PC-3 (cell line): ENCODE measurements at regions of chr5 and their contacts with region 1.

Region 1: DNA sequence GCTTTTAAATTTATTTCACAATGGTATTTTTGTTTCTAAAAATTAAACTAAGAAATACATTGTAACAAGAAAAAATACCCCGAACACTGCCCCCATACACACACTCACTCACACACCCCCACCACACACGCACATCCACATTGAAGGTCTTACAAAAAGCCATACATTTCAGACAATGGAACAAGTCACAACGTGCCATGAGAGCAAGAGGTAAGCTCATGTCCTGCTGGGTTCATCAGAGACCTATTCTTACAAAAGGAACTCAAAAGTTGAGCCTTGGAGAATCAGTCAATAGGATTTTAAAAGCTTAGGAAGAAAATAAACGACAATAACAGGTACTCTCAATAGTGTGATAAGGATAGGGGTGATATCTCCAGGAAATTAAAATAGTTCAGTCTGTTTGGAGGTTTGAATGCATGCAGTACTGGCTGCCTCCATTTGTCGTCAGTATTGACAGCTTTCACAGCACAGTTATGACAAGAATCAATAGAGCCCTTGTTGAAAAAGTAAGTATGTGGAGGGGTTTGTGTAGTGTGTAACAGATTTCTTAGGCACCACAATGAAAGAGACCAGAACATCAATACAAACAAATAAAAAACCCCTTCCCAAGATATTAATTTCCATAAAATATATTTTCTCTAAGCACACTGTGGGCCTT is 1826.2 kb upstream of the CDH6 start:
- DNase-seq: peak; percentile 49
- ATAC-seq: peak; percentile 89
- H3K4me3 ChIP-seq: no peak overlapping the region
- H3K27ac ChIP-seq: no peak overlapping the region
- H3K4me1 ChIP-seq: no peaks in the 10 kb centered on the region
- H3K27me3 ChIP-seq: no peaks in the 10 kb centered on the region
- CTCF ChIP-seq: peak; percentile 73

Region 2: GRCh38 chr5:29304555-29304954 is 62.8 kb before region 1 on chr5:
- CTCF ChIA-PET with region 1: no interaction called
- POLR2A ChIA-PET with region 1: no interaction called
- intact Hi-C with region 1: no loop called
- DNase-seq: peak; percentile 72
- ATAC-seq: peak; percentile 80
- H3K4me3 ChIP-seq: no peak overlapping the region
- H3K27ac ChIP-seq: peak overlapping the region; percentile 10
- H3K4me1 ChIP-seq: peaks cover 22% of the 10 kb centered on the region
- H3K27me3 ChIP-seq: no peaks in the 10 kb centered on the region
- CTCF ChIP-seq: no peak

Region 3: DNA sequence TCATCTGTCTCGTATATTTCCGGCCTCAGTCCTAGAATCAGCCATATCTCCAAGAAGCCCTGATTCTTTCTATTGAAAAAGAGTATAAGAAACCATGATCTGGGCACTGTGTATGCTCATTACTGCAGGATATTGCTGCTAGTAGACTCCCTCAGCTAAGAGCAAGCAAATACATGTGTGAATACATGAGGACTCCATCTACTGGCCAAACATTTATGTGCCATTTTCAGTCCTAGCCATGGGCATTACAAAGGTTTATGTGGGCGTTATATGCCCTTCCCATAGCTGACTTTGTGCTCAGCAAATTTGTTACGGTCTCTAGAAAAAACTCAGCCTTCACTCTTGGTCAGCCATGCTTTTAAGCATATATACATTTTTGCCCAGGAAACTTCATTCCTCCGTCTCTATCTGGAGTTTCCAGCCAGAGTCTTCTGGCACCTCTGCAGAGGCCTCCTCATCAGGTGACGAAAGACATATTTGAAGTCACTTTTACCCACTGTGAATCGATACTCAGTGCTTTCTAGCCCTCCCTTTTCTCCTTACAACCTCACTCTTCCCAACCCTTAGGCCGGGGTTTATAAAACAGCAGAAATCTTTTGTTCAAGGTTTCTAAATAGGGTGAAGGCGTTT is 330.6 kb after region 1 on chr5:
- CTCF ChIA-PET with region 1: interaction called, 4 read pairs
- POLR2A ChIA-PET with region 1: no interaction called
- intact Hi-C with region 1: loop called (anchors 10 kb)
- DNase-seq: peak; percentile 48
- ATAC-seq: peak; percentile 45
- H3K4me3 ChIP-seq: no peak overlapping the region
- H3K27ac ChIP-seq: no peak overlapping the region
- H3K4me1 ChIP-seq: 0 out of 2 replicates have a peak, but pooled peaks cover 2% of the 10 kb centered on the region
- H3K27me3 ChIP-seq: no peaks in the 10 kb centered on the region
- CTCF ChIP-seq: peak; percentile 73

Region 4: DNA sequence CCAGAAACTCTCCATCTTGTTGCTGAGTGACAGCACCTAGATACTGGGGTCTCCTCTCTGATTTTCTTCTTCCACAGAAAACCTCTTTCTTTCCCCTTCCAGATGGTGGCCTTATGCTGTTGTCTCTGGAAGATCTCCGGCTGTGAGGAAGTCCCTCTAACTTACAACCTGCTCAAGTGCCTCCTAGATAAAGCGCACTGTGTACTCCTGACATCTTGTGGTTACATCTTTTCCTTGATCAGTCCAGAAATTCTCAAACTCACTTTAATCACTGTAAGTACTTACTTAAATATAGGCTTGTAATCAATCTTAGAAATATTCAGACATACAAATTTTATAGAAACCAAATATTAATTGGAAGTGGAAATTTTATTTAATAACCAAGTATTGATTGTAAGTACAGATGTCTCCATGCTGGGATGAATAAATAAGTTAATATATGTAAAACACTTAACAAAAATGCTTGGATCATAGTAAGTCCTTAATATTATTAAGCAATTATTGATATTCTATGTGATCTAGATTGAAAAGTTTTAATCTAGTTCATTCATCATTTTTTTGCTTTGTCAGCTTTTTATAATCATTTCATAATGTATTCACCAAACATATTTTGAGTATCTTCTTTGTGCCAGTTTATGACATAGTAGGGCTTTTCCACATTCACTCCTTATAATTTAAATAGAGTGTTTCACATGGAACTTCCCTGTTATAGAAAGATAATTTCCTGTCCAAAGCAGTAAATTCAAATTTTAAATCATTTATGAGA is 444.8 kb after region 1 on chr5:
- CTCF ChIA-PET with region 1: no interaction called
- POLR2A ChIA-PET with region 1: no interaction called
- intact Hi-C with region 1: loop called (anchors 1 kb)
- DNase-seq: peak; percentile 42
- ATAC-seq: peak; percentile 76
- H3K4me3 ChIP-seq: no peak overlapping the region
- H3K27ac ChIP-seq: no peak overlapping the region
- H3K4me1 ChIP-seq: no peaks in the 10 kb centered on the region
- H3K27me3 ChIP-seq: no peaks in the 10 kb centered on the region
- CTCF ChIP-seq: peak; percentile 59

Region 5: GRCh38 chr5:29942089-29942488 is 574.8 kb after region 1 on chr5:
- CTCF ChIA-PET with region 1: no interaction called
- POLR2A ChIA-PET with region 1: no interaction called
- intact Hi-C with region 1: loop called (anchors 2 kb)
- DNase-seq: peak; percentile 53
- ATAC-seq: peak; percentile 71
- H3K4me3 ChIP-seq: no peak overlapping the region
- H3K27ac ChIP-seq: peak overlapping the region; percentile 35
- H3K4me1 ChIP-seq: 0 out of 2 replicates have a peak, but pooled peaks cover 16% of the 10 kb centered on the region
- H3K27me3 ChIP-seq: no peaks in the 10 kb centered on the region
- CTCF ChIP-seq: no peak

Region 6: GRCh38 chr5:30030110-30030509 is 662.8 kb after region 1 on chr5:
- CTCF ChIA-PET with region 1: no interaction called
- POLR2A ChIA-PET with region 1: no interaction called
- intact Hi-C with region 1: loop called (anchors 10 kb)
- DNase-seq: peak; percentile 42
- ATAC-seq: peak; percentile 96
- H3K4me3 ChIP-seq: no peak overlapping the region
- H3K27ac ChIP-seq: no peak overlapping the region
- H3K4me1 ChIP-seq: peaks cover 11% of the 10 kb centered on the region
- H3K27me3 ChIP-seq: no peaks in the 10 kb centered on the region
- CTCF ChIP-seq: no peak